HAP-1 (cell line): ENCODE measurements at regions of chr4 and their contacts with region 1.

Region 1: GRCh38 chr4:69881173-69881773 is 21.3 kb upstream of the SULT1E1 start:
- DNase-seq: peak; percentile 24 to 50
- H3K4me3 ChIP-seq: no peak overlapping the region
- H3K4me1 ChIP-seq: no peaks in the 10 kb centered on the region
- H3K27me3 ChIP-seq: no peaks in the 10 kb centered on the region

Region 2: DNA sequence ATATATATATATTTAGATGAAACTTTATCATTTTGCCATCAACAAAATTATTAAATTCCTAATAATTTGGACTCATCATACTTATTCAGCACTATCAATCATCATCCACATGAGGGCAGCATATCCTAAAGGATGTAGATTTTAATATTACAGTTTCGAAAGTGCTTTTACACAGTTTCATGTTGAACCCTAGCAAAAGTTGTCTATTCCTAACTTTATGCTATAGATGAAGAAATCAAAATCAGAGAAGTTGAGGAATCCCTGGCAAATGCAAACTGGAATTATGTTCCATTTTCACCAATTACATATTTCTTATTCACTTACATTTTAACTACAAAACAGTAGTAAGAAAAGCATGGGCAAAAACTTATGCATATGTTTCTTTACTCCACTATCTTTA is 191.7 kb before region 1 on chr4:
- in situ Hi-C with region 1: loop called (anchors 25 kb)
- DNase-seq: peak in 1 of 2 experiments; percentile 23
- H3K4me3 ChIP-seq: no peak overlapping the region
- H3K4me1 ChIP-seq: peaks cover 7% of the 10 kb centered on the region
- H3K27me3 ChIP-seq: no peaks in the 10 kb centered on the region

Region 3: GRCh38 chr4:69760455-69760854 is 120.8 kb before region 1 on chr4 and contains the start of gene SULT1B1:
- in situ Hi-C with region 1: no loop called
- DNase-seq: no peak
- H3K4me3 ChIP-seq: no peak within 1 kb of the TSS
- H3K4me1 ChIP-seq: peaks cover 11% of the 10 kb centered on the region
- H3K27me3 ChIP-seq: no peaks in the 10 kb centered on the region

Region 4: GRCh38 chr4:70544279-70544868 is 663.1 kb after region 1 on chr4:
- in situ Hi-C with region 1: loop called (anchors 25 kb)
- DNase-seq: no peak
- H3K4me3 ChIP-seq: no peak overlapping the region
- H3K4me1 ChIP-seq: no peaks in the 10 kb centered on the region
- H3K27me3 ChIP-seq: no peaks in the 10 kb centered on the region